AG04450 (cell line): ENCODE measurements at regions of chr15 and their contacts with region 1.

Region 1: GRCh38 chr15:30073915-30074314 is 8.8 kb upstream of the GOLGA8J start:
- DNase-seq: no peak
- H3K4me3 ChIP-seq: no peak overlapping the region
- H3K27ac ChIP-seq: no peak overlapping the region
- H3K27me3 ChIP-seq: peaks cover 13% of the 10 kb centered on the region
- CTCF ChIP-seq: no peak

Region 2: GRCh38 chr15:29668120-29668602 is 405.8 kb before region 1 on chr15:
- CTCF ChIA-PET with region 1: interaction called, 33 read pairs
- POLR2A ChIA-PET with region 1: no interaction called
- DNase-seq: peak; percentile 63
- H3K4me3 ChIP-seq: no peak overlapping the region
- H3K27ac ChIP-seq: no peak overlapping the region
- H3K27me3 ChIP-seq: no peaks in the 10 kb centered on the region
- CTCF ChIP-seq: peak; percentile 84

Region 3: GRCh38 chr15:29676961-29677402 is 396.9 kb before region 1 on chr15:
- CTCF ChIA-PET with region 1: interaction called, 33 read pairs
- POLR2A ChIA-PET with region 1: no interaction called
- DNase-seq: no peak
- H3K4me3 ChIP-seq: no peak overlapping the region
- H3K27ac ChIP-seq: peak overlapping the region; percentile 2
- H3K27me3 ChIP-seq: no peaks in the 10 kb centered on the region
- CTCF ChIP-seq: no peak

Region 4: GRCh38 chr15:29704950-29705597 is 368.8 kb before region 1 on chr15:
- CTCF ChIA-PET with region 1: interaction called, 17 read pairs
- POLR2A ChIA-PET with region 1: no interaction called
- DNase-seq: no peak
- H3K4me3 ChIP-seq: no peak overlapping the region
- H3K27ac ChIP-seq: no peak overlapping the region
- H3K27me3 ChIP-seq: no peaks in the 10 kb centered on the region
- CTCF ChIP-seq: no peak

Region 5: GRCh38 chr15:29740692-29741311 is 333.1 kb before region 1 on chr15:
- CTCF ChIA-PET with region 1: interaction called, 85 read pairs
- POLR2A ChIA-PET with region 1: no interaction called
- DNase-seq: no peak
- H3K4me3 ChIP-seq: no peak overlapping the region
- H3K27ac ChIP-seq: no peak overlapping the region
- H3K27me3 ChIP-seq: no peaks in the 10 kb centered on the region
- CTCF ChIP-seq: peak; percentile 11; the same call in 1 of the 2 replicates

Region 6: DNA sequence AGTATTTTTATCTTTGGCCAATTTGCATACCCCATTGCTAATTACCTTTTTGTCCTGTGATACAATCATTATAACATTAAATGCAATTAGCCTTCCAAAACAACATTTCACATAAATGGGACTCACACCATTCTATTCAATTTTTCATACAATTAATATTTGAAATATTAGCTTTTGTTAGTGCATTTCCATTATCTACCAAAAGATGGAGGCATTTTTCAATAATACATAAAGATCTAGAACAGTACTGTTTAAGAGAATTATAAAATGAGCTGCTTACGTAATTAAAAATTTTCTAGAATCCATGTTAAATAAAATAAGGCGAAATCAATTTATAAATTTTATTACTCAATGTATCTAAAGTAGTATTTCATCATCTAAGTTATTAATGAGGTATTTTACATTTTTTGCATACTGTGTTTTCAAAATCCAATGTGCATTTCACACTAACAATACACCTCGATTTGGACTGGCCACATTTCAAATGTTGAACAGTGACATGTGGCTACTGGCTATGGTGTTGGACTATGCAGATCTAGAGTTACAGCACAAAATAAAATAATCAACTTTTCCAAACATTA is 326.0 kb before region 1 on chr15:
- CTCF ChIA-PET with region 1: interaction called, 85 read pairs
- POLR2A ChIA-PET with region 1: no interaction called
- DNase-seq: no peak
- H3K4me3 ChIP-seq: no peak overlapping the region
- H3K27ac ChIP-seq: no peak overlapping the region
- H3K27me3 ChIP-seq: no peaks in the 10 kb centered on the region
- CTCF ChIP-seq: peak; percentile 46

Region 7: GRCh38 chr15:30043211-30043655 is 30.7 kb before region 1 on chr15:
- CTCF ChIA-PET with region 1: interaction called, 13 read pairs
- POLR2A ChIA-PET with region 1: interaction called, 4 read pairs
- DNase-seq: no peak
- H3K4me3 ChIP-seq: no peak overlapping the region
- H3K27ac ChIP-seq: no peak overlapping the region
- H3K27me3 ChIP-seq: no peaks in the 10 kb centered on the region
- CTCF ChIP-seq: peak; percentile 38